ENCODE measurements at regions of chr20 and their contacts with region 1.

Region 1: GRCh38 chr20:48828022-48828743 is 384 bp upstream of the PREX1 start:
- DNase-seq: peak; percentile 90
- ATAC-seq: peak; percentile 80

Region 2: DNA sequence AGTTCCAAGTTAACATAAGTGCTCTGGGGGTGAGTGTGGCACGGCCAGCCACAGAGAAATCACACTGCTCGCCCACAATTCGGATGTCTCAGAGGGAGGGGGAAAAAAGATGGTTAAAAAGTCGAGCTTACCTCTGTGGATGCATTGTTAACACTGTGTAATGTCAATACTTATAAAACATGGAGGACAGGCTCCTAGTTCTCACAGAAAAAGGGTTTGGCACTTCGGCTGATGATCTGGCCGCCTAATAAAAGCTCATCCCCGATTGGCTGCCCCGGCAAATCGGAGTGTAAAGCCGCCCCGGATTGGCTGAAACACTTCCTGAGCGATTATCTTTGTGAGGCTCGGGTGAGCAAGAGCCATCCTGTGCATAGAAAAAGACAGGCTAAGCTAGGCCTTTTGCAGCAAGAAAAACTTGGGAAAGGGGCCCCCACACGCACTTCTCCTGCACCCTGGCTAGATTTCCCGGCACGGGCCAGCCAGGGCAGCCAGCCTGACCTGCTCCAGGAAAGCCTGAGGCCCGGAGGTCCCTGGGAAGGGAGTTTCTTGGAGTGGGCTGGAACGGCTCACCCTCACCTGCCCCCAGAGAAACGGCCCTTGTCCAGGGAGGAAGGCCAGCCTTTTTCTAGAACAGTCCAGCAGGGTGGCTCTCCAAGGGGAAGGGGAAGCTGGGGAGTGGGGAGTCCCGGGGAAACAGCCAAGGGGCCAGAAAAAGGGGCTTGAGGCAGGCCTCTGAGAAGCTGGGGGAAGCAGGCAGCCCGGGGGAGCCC is 1471.5 kb before region 1 on chr20 and contains the start of gene ZMYND8:
- intact Hi-C with region 1: no loop called
- DNase-seq: peak; percentile 93
- ATAC-seq: peak; percentile 66
- total RNA-seq, gene ZMYND8: 37.7 TPM

Region 3: GRCh38 chr20:48682529-48683251 is 145.5 kb before region 1 on chr20:
- intact Hi-C with region 1: loop called (anchors 5 kb)
- DNase-seq: peak; percentile 93
- ATAC-seq: peak; percentile 93

Measured in Right ventricle myocardium superior (tissue), 1 donor.